Heart left ventricle (tissue), 16 donors: ENCODE measurements at regions of chr7 and their contacts with region 1.

Region 1: DNA sequence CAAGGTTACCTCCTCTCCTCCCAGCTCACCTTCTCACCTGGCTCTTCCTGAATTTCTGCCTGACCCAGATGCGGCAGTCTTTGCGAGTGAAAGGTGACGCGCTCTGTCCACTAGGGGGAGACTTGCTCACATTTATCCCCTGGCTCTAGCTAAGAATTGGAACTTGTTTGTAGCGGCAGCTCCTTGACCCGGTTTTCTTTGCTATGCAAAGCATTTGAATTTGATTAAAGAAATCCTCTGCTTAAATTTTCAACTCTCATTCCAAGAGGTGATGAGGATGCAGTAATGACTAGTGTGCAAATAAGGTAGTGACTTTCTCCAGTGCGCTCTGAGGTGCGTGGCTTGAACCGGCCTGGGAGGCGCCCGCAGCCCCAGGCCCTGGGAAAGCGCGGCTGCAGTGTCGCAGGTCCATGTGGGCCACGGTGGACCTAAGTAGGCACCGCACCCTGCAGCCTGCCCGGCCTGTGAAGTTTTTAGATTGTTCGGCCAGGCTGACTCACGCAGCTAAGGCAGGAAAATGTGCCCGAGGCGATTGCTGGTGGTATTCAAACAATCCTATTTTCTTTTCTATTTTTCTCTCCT is 336.9 kb upstream of the NPSR1 start:
- DNase-seq: peak in 4 of 5 donors; percentile 23 to 37 (median 32)
- ATAC-seq: peak; percentile 58 to 85 (median 79)
- H3K4me3 ChIP-seq: peak overlapping the region in 7 of 12 donors; percentile 15 to 47 (median 27)
- H3K27ac ChIP-seq: no peak overlapping the region
- H3K4me1 ChIP-seq: peaks cover 0 to 7% (median 0%) of the 10 kb centered on the region in 12 donors
- H3K27me3 ChIP-seq: peaks cover 0 to 6% (median 0%) of the 10 kb centered on the region in 9 donors
- CTCF ChIP-seq: peak; percentile 61 to 86 (median 76)
- POLR2A ChIP-seq: no peak

Region 2: GRCh38 chr7:34133983-34134782 is 186.9 kb before region 1 on chr7:
- intact Hi-C with region 1: loop called in 2 of 10 experiments (anchors 10 kb)
- DNase-seq: peak; percentile 42 to 66 (median 52)
- ATAC-seq: peak in 3 of 4 donors; percentile 55 to 74 (median 66)
- H3K4me3 ChIP-seq: no peak overlapping the region
- H3K27ac ChIP-seq: no peak overlapping the region
- H3K4me1 ChIP-seq: no peaks in the 10 kb centered on the region
- H3K27me3 ChIP-seq: no peaks in the 10 kb centered on the region
- CTCF ChIP-seq: peak; percentile 44 to 75 (median 61)
- POLR2A ChIP-seq: no peak

Region 3: DNA sequence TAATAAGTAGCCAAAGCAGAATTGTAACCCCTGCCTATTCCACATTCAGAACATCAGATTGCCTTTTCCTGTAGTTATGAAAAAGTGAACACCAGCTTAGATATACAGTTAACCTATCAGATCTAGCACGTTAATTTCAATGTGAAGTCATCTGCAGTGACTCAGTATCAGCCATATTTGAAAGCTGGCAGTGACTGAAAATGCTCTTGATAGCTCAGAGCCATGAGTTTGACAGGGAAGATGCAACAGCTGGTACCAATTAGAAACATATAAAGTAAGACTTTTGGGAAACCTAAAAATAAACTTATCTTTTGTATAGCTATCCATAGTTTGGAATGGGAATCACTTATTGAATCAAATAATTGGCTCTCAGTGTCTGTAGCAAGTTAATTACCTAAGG is 52.8 kb after region 1 on chr7:
- intact Hi-C with region 1: no loop called
- DNase-seq: no peak
- ATAC-seq: no peak
- H3K4me3 ChIP-seq: no peak overlapping the region
- H3K27ac ChIP-seq: no peak overlapping the region
- H3K4me1 ChIP-seq: no peaks in the 10 kb centered on the region
- H3K27me3 ChIP-seq: no peaks in the 10 kb centered on the region
- CTCF ChIP-seq: no peak
- POLR2A ChIP-seq: no peak

Region 4: DNA sequence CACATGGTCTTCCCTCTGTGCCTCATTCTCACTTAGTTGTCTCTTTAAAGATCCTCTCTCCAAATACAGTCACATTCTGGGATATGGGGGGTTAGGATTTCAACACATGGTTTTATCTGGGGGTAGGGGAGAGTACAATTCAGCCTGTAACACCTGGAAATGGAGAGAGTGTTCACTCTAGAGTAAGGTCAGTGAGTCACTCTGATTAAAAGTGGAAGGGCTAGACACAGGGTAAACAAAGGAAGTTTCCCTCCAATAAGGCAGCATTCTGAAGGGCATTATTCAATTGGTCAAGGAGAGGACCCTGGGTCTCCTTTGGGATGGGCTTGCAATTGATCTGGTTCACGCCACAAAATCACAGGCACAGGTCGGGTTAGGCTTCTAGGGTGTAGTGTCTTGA is 104.1 kb after region 1 on chr7:
- intact Hi-C with region 1: loop called in 5 of 10 experiments (anchors 2 to 10 kb)
- DNase-seq: no peak
- ATAC-seq: no peak
- H3K4me3 ChIP-seq: no peak overlapping the region
- H3K27ac ChIP-seq: no peak overlapping the region
- H3K4me1 ChIP-seq: no peaks in the 10 kb centered on the region
- H3K27me3 ChIP-seq: no peaks in the 10 kb centered on the region
- CTCF ChIP-seq: no peak
- POLR2A ChIP-seq: no peak

Region 5: DNA sequence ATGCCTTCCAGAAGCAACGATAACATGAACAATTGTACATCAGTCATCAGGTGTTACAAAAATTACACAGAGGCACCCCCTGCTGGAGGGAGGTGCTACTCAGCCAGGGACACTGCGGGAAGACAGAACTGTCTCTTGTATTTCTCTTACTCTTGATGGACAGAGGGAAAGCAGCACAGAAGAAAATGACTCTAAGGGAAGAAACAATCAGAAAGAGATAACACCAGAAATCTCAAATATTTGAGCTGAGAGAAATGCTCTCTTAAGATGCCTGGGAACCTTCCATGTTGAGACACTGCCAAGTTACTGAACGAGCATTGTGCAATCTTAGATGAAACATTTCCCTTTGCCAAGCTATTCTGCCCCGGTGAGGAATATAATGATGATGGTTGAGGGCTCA is 109.4 kb after region 1 on chr7:
- intact Hi-C with region 1: loop called in 5 of 10 experiments (anchors 2 to 10 kb)
- DNase-seq: peak in 1 of 5 donors; percentile 10
- ATAC-seq: peak in 2 of 4 donors; percentile 46 to 57
- H3K4me3 ChIP-seq: no peak overlapping the region
- H3K27ac ChIP-seq: no peak overlapping the region
- H3K4me1 ChIP-seq: no peaks in the 10 kb centered on the region
- H3K27me3 ChIP-seq: no peaks in the 10 kb centered on the region
- CTCF ChIP-seq: peak in 10 of 12 donors; percentile 17 to 57 (median 36)
- POLR2A ChIP-seq: no peak